ENCODE measurements at regions of chr3 and their contacts with region 1.

Region 1: DNA sequence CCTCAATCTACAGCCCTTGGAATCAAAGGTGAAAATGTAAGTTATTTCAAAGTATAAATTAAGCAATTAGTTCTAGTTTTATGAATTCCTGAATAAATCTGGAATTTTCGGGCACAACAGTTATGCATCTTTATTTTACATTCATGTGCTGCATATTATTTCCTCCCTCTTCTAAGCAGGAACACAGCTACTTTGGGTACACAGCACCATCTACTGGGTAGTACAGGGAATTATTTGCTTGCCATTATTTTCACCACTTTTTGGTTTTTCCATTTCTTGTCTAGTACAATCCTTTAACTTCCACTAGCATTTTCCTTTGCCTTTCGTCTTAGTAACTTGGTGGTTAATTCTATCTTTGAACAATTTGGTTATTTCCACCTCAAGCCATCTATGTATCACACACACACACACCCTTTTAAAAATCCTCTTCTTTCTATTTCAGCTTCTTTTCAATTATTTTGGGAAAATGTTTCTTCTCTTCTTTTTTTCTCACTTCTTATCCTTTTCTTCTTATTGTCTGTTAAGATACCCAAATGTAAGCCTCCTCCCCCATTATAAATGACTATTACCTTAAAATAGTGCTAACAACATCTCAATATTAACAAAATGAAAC is 451.0 kb downstream of the MFSD1 start:
- DNase-seq: peak in 1 of 2 experiments; percentile 22
- H3K4me3 ChIP-seq: no peak overlapping the region
- H3K27ac ChIP-seq: no peak overlapping the region
- H3K4me1 ChIP-seq: no peaks in the 10 kb centered on the region
- H3K27me3 ChIP-seq: no peaks in the 10 kb centered on the region
- CTCF ChIP-seq: peak; percentile 96

Region 2: DNA sequence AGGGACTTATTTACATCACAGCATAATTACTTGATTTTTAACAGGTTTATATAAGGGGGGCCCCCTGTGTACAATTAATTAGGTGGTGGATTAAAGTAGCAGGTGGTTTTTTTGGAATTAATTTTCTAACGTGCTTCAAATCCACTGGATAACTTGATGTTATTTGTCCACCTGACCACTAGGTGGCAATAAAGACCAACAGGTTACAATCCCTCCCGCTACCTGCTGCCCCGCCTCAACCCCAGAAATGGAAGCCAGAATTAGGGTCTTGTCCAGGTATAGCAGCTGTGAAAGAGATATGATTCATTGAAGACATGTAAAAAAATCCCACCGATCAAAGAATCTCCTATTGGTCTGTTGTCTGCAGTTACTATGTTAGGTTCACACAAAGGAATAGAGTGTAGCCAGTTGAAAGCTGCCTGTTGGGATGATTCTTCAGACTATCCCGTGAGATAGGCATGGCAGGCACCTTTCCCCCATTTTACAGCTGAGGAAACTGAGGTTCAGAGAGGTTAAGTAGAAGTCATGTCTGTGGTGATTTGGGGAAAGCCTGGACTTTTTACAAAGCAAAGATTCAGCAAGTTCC is 407.0 kb before region 1 on chr3:
- CTCF ChIA-PET with region 1: interaction called, 5 read pairs
- POLR2A ChIA-PET with region 1: no interaction called
- intact Hi-C with region 1: loop called (anchors 1 kb)
- DNase-seq: peak; percentile 43 to 49
- H3K4me3 ChIP-seq: no peak overlapping the region
- H3K27ac ChIP-seq: no peak overlapping the region
- H3K4me1 ChIP-seq: no peaks in the 10 kb centered on the region
- H3K27me3 ChIP-seq: no peaks in the 10 kb centered on the region
- CTCF ChIP-seq: peak; percentile 96

Region 3: DNA sequence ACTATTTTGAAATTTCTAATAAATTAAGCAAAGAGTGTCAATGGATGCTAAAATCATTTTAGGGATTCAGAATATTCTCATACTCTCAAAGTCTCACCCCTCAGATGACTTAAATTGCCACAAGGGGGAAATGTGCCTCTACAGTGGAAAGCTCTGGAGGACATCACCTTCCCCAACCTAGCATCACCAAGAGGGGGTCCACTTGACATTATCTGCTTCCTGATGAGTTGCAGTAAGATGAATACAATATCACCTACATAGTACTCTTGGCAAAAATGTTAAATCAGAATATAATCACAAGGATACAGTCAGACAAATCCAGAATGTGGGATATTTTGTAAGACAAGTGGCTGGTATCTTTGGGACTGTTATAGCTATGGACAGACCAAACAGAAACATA is 160.9 kb before region 1 on chr3:
- CTCF ChIA-PET with region 1: no interaction called
- POLR2A ChIA-PET with region 1: no interaction called
- intact Hi-C with region 1: loop called (anchors 5 kb)
- DNase-seq: no peak
- H3K4me3 ChIP-seq: no peak overlapping the region
- H3K27ac ChIP-seq: no peak overlapping the region
- H3K4me1 ChIP-seq: no peaks in the 10 kb centered on the region
- H3K27me3 ChIP-seq: no peaks in the 10 kb centered on the region
- CTCF ChIP-seq: 0 out of 2 replicates have a peak, but pooled peaks have one; percentile 18

Region 4: GRCh38 chr3:159158213-159158612 is 94.7 kb before region 1 on chr3:
- CTCF ChIA-PET with region 1: no interaction called
- POLR2A ChIA-PET with region 1: no interaction called
- intact Hi-C with region 1: loop called (anchors 5 kb)
- DNase-seq: no peak
- H3K4me3 ChIP-seq: no peak overlapping the region
- H3K27ac ChIP-seq: no peak overlapping the region
- H3K4me1 ChIP-seq: peaks cover 12% of the 10 kb centered on the region
- H3K27me3 ChIP-seq: no peaks in the 10 kb centered on the region
- CTCF ChIP-seq: no peak

Region 5: DNA sequence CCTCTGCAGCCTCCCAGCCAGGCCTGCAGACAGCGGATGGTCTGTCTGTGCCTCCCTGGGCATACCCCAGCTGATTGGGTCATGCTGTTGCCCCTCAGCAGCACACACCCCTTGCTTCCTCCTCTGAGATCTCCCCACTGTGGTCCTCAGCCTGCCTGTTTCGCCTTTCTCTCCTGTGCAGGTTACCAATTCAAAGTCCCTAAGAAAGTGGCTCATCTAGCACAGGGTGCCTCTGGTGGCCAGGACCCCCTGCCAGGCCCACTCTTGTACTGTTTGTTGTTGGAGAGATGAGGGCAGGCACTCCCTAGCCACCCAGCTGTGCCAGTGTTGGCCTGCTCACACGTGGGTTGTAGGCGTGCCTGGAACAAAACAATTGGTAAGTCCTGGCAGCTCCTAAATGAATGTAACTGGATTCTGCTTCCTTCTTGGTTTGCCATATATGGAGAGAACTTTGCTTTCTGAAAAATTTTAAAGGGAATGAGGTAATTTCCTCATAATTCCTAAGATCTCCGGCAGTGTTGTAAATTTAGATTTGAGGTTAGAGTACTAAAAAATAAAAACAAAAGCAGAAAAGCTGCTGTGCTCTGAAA is 522.6 kb after region 1 on chr3:
- CTCF ChIA-PET with region 1: no interaction called
- POLR2A ChIA-PET with region 1: no interaction called
- intact Hi-C with region 1: no loop called
- DNase-seq: peak; percentile 56 to 61
- H3K4me3 ChIP-seq: no peak overlapping the region
- H3K27ac ChIP-seq: no peak overlapping the region
- H3K4me1 ChIP-seq: peaks cover 23% of the 10 kb centered on the region
- H3K27me3 ChIP-seq: no peaks in the 10 kb centered on the region
- CTCF ChIP-seq: no peak